Psoas muscle (tissue), 8 donors: ENCODE measurements at regions of chr3 and their contacts with region 1.

Region 1: GRCh38 chr3:196684548-196685407 is 27.3 kb downstream of the CEP19 start:
- DNase-seq: peak in 1 of 2 donors; percentile 46
- ATAC-seq: peak; percentile 61 to 86 (median 82)
- H3K4me3 ChIP-seq: peak overlapping the region; percentile 19
- H3K27ac ChIP-seq: no peak overlapping the region
- H3K4me1 ChIP-seq: peaks cover 6% of the 10 kb centered on the region
- H3K27me3 ChIP-seq: no peaks in the 10 kb centered on the region
- CTCF ChIP-seq: peak; percentile 87

Region 2: GRCh38 chr3:196528639-196529233 is 156.0 kb before region 1 on chr3:
- intact Hi-C with region 1: loop called in 1 of 2 experiments (anchors 2 kb)
- DNase-seq: peak; percentile 82
- ATAC-seq: peak; percentile 86 to 98 (median 98)
- H3K4me3 ChIP-seq: peak overlapping the region; percentile 55
- H3K27ac ChIP-seq: no peak overlapping the region
- H3K4me1 ChIP-seq: no peaks in the 10 kb centered on the region
- H3K27me3 ChIP-seq: peaks cover 0 to 2% (median 2%) of the 10 kb centered on the region in 3 donors
- CTCF ChIP-seq: peak; percentile 61

Region 3: DNA sequence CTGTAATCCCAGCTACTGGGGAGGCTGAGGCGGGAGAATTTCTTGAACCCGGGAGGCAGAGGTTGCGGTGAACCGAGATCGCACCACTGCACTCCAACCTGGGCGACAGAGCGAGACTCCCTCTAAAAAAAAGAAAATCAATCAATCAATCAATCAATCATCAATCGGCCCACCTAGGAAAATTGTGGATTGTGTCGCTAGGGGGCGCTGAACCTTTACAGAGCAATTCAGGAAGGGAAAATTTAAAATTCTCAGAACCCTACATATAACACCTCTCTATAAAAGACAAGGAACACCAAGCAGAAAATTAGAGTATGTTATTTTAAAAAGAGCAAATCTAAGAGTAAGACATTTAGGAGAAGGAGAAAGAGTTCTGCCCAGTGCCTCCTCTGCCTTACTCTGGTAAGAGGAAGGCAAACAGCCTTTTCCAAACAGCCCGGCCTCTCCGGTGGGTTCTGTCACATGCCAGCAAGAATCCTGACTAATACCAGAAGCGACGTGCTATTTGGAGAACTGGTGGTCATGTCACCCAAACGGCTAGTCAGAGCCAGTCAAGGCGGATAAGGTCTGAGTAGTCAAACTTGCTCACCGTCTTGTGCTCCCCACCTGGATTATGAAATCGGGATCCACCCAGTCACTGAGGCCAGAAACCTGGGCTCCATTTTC is 147.3 kb before region 1 on chr3:
- intact Hi-C with region 1: loop called in 1 of 2 experiments (anchors 2 kb)
- DNase-seq: peak in 1 of 2 donors; percentile 27
- ATAC-seq: peak in 1 of 4 donors; percentile 40
- H3K4me3 ChIP-seq: no peak overlapping the region
- H3K27ac ChIP-seq: no peak overlapping the region
- H3K4me1 ChIP-seq: no peaks in the 10 kb centered on the region
- H3K27me3 ChIP-seq: peaks cover 0 to 7% (median 2%) of the 10 kb centered on the region in 3 donors
- CTCF ChIP-seq: peak; percentile 52

Region 4: DNA sequence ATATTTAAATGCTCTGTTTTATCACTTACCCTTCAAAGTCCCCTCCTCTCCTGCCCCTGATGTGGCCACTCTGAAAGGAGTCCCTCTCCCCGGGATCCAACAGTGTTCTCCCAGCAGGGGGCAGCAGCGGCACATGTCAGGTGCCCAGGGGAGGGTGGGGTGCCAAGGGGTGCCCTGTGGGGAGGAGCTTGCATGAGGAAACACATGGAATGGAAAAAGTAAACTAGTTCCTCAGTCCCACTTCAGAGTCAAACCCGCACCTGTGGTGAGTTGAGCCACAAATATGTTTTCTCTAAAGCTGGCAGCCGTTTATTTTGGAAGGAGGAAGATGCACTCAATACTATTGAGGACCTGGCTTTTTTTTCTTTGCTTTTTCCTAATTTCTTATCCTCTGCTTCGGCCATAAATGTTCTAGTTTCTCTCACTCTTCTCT is 75.4 kb before region 1 on chr3:
- intact Hi-C with region 1: loop called (anchors 1 to 5 kb)
- DNase-seq: peak; percentile 85 to 91
- ATAC-seq: peak; percentile 61 to 89 (median 86)
- H3K4me3 ChIP-seq: peak overlapping the region; percentile 6
- H3K27ac ChIP-seq: no peak overlapping the region
- H3K4me1 ChIP-seq: no peaks in the 10 kb centered on the region
- H3K27me3 ChIP-seq: no peaks in the 10 kb centered on the region
- CTCF ChIP-seq: peak; percentile 70